Esophagus muscularis mucosa (tissue), 4 donors: ENCODE measurements at regions of chr19 and their contacts with region 1.

Region 1: GRCh38 chr19:19366612-19367396 is 38.7 kb upstream of the GATAD2A start:
- DNase-seq: no peak
- H3K4me3 ChIP-seq: no peak overlapping the region
- H3K27ac ChIP-seq: no peak overlapping the region
- H3K4me1 ChIP-seq: peaks cover 12 to 23% (median 17%) of the 10 kb centered on the region in 4 donors
- H3K27me3 ChIP-seq: no peaks in the 10 kb centered on the region
- CTCF ChIP-seq: peak; percentile 93 to 96 (median 96)
- EP300 ChIP-seq: no peak
- POLR2A ChIP-seq: no peak

Region 2: GRCh38 chr19:19304186-19304965 is 62.4 kb before region 1 on chr19:
- intact Hi-C with region 1: no loop called
- DNase-seq: no peak
- H3K4me3 ChIP-seq: no peak overlapping the region
- H3K27ac ChIP-seq: no peak overlapping the region
- H3K4me1 ChIP-seq: no peaks in the 10 kb centered on the region
- H3K27me3 ChIP-seq: no peaks in the 10 kb centered on the region
- CTCF ChIP-seq: no peak
- EP300 ChIP-seq: no peak
- POLR2A ChIP-seq: no peak

Region 3: GRCh38 chr19:19320362-19321142 is 46.3 kb before region 1 on chr19 and contains the starts of genes MAU2 and SUGP1:
- intact Hi-C with region 1: no loop called
- DNase-seq: peak; percentile 95
- H3K4me3 ChIP-seq: peak within 1 kb of the TSS; percentile 75 to 98 (median 90)
- H3K27ac ChIP-seq: peak within 1 kb of the TSS; percentile 86 to 92 (median 89)
- H3K4me1 ChIP-seq: peaks cover 43 to 56% (median 48%) of the 10 kb centered on the region in 4 donors
- H3K27me3 ChIP-seq: no peaks in the 10 kb centered on the region
- CTCF ChIP-seq: peak; percentile 14 to 52 (median 38)
- EP300 ChIP-seq: no peak
- POLR2A ChIP-seq: no peak
- total RNA-seq, gene MAU2: 27.4 to 47.8 (median 37.6) TPM
- total RNA-seq, gene SUGP1: 26.0 to 43.8 (median 30.8) TPM

Region 4: GRCh38 chr19:19404879-19405860 is 38.4 kb after region 1 on chr19 and contains the start of gene GATAD2A:
- intact Hi-C with region 1: loop called (anchors 5 kb)
- DNase-seq: peak; percentile 97
- H3K4me3 ChIP-seq: peak within 1 kb of the TSS; percentile 76 to 98 (median 92)
- H3K27ac ChIP-seq: peak within 1 kb of the TSS; percentile 83 to 91 (median 86)
- H3K4me1 ChIP-seq: peaks cover 44 to 68% (median 65%) of the 10 kb centered on the region in 4 donors
- H3K27me3 ChIP-seq: no peaks in the 10 kb centered on the region
- CTCF ChIP-seq: peak; percentile 32 to 43 (median 39)
- EP300 ChIP-seq: no peak
- POLR2A ChIP-seq: no peak
- total RNA-seq, gene GATAD2A: 34.9 to 60.5 (median 42.5) TPM